ENCODE measurements at regions of chr2 and their contacts with region 1.

Region 1: GRCh38 chr2:24490674-24491625 is at the start of gene NCOA1:
- DNase-seq: peak; percentile 87
- H3K4me3 Mint-ChIP-seq: peak within 1 kb of the TSS; percentile 96
- H3K27ac Mint-ChIP-seq: peak within 1 kb of the TSS; percentile 95
- H3K4me1 Mint-ChIP-seq: peaks cover 43% of the 10 kb centered on the region
- H3K27me3 Mint-ChIP-seq: peaks cover 7% of the 10 kb centered on the region
- total RNA-seq, gene NCOA1: 28.7 and 30.0 TPM in 2 replicates

Region 2: DNA sequence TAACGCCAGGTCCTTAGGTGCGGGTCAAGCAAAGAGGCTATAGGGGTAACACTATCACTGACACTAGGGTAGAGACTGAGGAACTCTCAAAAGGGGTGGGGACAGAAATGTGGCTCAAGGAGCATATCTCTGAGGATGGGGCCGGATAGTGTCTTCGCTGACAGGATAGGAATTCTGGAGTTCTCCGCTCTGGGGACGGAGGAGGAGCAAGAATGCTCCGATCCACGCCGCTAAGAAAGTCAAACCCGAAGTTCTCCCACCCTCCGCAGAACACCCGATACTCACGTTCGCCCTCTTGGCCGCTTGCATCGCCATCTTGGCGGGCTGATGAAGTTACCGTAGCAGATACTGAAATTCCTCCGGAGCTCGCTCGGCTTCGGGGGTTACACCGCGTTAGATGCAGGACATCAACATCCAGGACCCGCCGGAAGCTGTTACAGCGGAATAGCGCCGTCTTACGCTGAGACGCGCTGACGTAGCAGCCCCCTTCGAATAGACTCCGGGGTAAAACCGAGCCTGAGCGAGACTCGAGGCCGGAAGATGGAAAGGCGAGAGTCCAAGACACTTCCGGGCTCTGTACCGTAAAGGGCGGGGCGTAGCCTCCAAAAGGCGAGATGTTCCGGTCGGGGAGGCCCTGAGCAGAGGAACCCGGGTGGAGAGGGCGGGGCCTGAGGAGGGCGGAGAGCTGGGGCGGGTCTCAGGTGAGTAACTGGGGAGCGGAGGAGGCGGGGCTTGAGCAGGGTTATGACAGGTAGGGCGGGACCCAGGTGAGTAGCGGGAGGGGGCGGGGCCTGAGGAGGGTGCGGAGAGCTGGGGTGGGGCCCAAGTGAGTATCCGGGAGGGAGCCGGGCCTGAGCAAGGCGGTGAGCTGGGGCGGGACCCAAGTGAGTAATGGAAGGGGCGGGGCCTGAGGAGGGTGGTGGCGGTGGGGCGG is 414.8 kb before region 1 on chr2 and contains the start of gene SF3B6:
- intact Hi-C with region 1: loop called (anchors 1 kb)
- DNase-seq: peak; percentile 98
- H3K4me3 Mint-ChIP-seq: peak within 1 kb of the TSS; percentile 98
- H3K27ac Mint-ChIP-seq: peak within 1 kb of the TSS; percentile 94
- H3K4me1 Mint-ChIP-seq: peaks cover 33% of the 10 kb centered on the region
- H3K27me3 Mint-ChIP-seq: peaks cover 2% of the 10 kb centered on the region
- total RNA-seq, gene SF3B6: 128 and 145 TPM in 2 replicates

Region 3: DNA sequence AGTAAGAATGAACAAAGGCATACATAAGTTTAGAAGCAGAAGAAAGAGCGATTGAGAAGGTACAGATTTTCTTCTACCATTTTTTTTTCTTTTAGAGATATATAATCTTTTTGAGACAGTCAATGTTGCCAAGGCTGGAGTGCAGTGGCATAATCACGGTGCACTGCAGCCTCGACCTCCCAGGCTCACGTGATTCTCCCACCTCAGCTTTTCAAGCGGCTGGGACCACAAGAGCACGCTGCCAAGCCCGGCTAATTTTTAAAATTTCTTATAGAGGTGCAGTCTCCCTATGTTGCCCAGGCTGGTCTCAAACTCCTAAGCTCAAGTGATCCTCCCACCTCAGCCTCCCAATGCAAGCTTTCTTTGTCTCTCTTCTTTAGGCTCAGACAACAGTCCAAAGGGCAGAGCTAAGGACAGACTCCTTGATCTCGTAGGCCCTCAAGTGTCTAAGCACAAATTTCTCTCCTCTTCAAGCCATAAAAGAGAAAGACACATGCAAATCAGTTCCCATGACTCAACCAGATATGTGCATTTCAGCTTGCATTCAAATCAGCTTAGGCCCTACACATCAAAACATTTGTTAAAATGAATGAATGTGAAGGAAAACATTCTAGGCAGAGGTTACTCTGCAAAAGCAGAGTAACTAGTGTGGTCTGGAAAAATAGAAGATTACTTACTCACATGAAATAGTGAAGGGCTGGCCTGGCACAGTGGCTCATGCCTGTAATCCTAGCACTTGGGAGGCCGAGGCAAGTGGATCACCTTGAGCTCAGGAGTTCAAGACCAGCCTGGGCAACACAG is 148.6 kb before region 1 on chr2:
- intact Hi-C with region 1: no loop called
- DNase-seq: no peak
- H3K4me3 Mint-ChIP-seq: no peak overlapping the region
- H3K27ac Mint-ChIP-seq: no peak overlapping the region
- H3K4me1 Mint-ChIP-seq: peaks cover 19% of the 10 kb centered on the region
- H3K27me3 Mint-ChIP-seq: no peaks in the 10 kb centered on the region

Region 4: DNA sequence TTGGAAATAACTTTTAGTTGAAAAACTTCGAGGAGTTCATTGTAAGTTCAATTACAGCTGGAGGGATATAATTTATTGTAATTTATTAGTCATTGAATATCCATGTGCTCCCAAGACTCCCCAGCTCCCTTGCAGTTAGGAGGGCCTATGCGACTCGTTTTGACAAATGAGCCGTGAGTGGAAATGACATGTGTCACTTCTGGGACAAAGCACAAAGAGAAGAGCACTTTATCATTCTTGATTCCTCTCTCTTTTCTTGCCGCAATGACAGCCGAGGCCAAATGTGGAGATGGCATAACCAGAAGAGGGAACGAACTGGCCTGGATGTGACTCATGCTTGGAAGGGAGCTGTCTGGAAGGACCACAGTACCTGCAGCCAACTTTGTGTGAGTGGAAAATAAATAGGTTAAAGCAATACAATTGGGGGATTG is 86.4 kb before region 1 on chr2:
- intact Hi-C with region 1: no loop called
- DNase-seq: no peak
- H3K4me3 Mint-ChIP-seq: no peak overlapping the region
- H3K27ac Mint-ChIP-seq: no peak overlapping the region
- H3K4me1 Mint-ChIP-seq: peaks cover 13% of the 10 kb centered on the region
- H3K27me3 Mint-ChIP-seq: peaks cover 10% of the 10 kb centered on the region

Region 5: GRCh38 chr2:24421668-24422067 is 69.3 kb before region 1 on chr2:
- intact Hi-C with region 1: loop called (anchors 2 kb)
- DNase-seq: peak; percentile 27
- H3K4me3 Mint-ChIP-seq: no peak overlapping the region
- H3K27ac Mint-ChIP-seq: no peak overlapping the region
- H3K4me1 Mint-ChIP-seq: no peaks in the 10 kb centered on the region
- H3K27me3 Mint-ChIP-seq: peaks cover 9% of the 10 kb centered on the region

Region 6: DNA sequence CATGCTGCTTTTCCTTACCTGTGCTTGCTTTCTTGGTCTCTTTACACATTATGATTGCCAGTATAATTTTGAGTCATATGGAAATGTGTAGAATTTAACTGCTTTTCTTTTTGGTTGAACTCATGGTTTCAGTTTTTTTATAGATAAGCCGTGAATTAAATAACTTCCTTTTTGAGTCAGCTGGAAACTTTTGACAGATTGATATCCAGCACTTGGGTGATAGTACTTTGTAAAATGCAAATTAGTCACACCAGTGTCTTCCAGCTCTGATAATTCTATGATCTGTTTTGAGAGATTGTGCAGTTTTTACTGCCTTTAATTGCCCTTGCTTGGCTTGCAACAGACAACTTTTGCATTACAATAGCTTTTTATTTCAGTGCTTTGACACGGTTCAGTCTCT is 86.5 kb after region 1 on chr2:
- intact Hi-C with region 1: loop called (anchors 1 kb)
- DNase-seq: no peak
- H3K4me3 Mint-ChIP-seq: peak overlapping the region; percentile 69
- H3K27ac Mint-ChIP-seq: peak overlapping the region; percentile 82
- H3K4me1 Mint-ChIP-seq: peaks cover 73% of the 10 kb centered on the region
- H3K27me3 Mint-ChIP-seq: no peaks in the 10 kb centered on the region

Region 7: GRCh38 chr2:24792874-24793760 is 302.2 kb after region 1 on chr2 and contains the starts of genes CENPO and PTRHD1:
- intact Hi-C with region 1: loop called (anchors 1 kb)
- DNase-seq: peak; percentile 92
- H3K4me3 Mint-ChIP-seq: peak within 1 kb of the TSS; percentile 95
- H3K27ac Mint-ChIP-seq: peak within 1 kb of the TSS; percentile 99
- H3K4me1 Mint-ChIP-seq: peaks cover 47% of the 10 kb centered on the region
- H3K27me3 Mint-ChIP-seq: peaks cover 1% of the 10 kb centered on the region
- total RNA-seq, gene CENPO: 44.7 and 48.3 TPM in 2 replicates
- total RNA-seq, gene PTRHD1: 16.5 and 17.3 TPM in 2 replicates

Region 8: GRCh38 chr2:24920098-24920808 is 429.3 kb after region 1 on chr2 and contains the start of gene ADCY3:
- intact Hi-C with region 1: loop called (anchors 1 kb)
- DNase-seq: peak; percentile 49
- H3K4me3 Mint-ChIP-seq: peak within 1 kb of the TSS; percentile 93
- H3K27ac Mint-ChIP-seq: peak within 1 kb of the TSS; percentile 90
- H3K4me1 Mint-ChIP-seq: peaks cover 32% of the 10 kb centered on the region
- H3K27me3 Mint-ChIP-seq: peaks cover 2% of the 10 kb centered on the region
- total RNA-seq, gene ADCY3: 101 and 108 TPM in 2 replicates

Region 9: GRCh38 chr2:25294573-25295462 is 803.9 kb after region 1 on chr2:
- intact Hi-C with region 1: loop called (anchors 10 kb)
- DNase-seq: peak; percentile 77
- H3K4me3 Mint-ChIP-seq: peak overlapping the region; percentile 62
- H3K27ac Mint-ChIP-seq: peak overlapping the region; percentile 90
- H3K4me1 Mint-ChIP-seq: peaks cover 44% of the 10 kb centered on the region
- H3K27me3 Mint-ChIP-seq: no peaks in the 10 kb centered on the region